Naive thymus-derived CD4-positive, alpha-beta T cell (primary cell): ENCODE measurements at regions of chr1 and their contacts with region 1.

Region 1: GRCh38 chr1:235513495-235514366 is 9.5 kb upstream of the B3GALNT2 start:
- DNase-seq: peak in 7 of 9 donors; percentile 32 to 68 (median 53)
- ATAC-seq: peak; percentile 75
- H3K4me3 ChIP-seq: no peak overlapping the region
- H3K4me3 Mint-ChIP-seq: no peak overlapping the region
- H3K27ac ChIP-seq: no peak overlapping the region
- H3K27ac Mint-ChIP-seq: peak overlapping the region in 1 of 9 donors; percentile 41
- H3K4me1 ChIP-seq: no peaks in the 10 kb centered on the region
- H3K4me1 Mint-ChIP-seq: peaks cover 0 to 10% (median 0%) of the 10 kb centered on the region in 7 donors
- H3K27me3 ChIP-seq: no peaks in the 10 kb centered on the region
- H3K27me3 Mint-ChIP-seq: peaks cover 0 to 27% (median 3%) of the 10 kb centered on the region in 5 donors

Region 2: GRCh38 chr1:235357485-235358378 is 156.0 kb before region 1 on chr1:
- CTCF ChIA-PET with region 1: no interaction called
- POLR2A ChIA-PET with region 1: no interaction called
- intact Hi-C with region 1: no loop called
- DNase-seq: no peak
- ATAC-seq: no peak
- H3K4me3 ChIP-seq: no peak overlapping the region
- H3K4me3 Mint-ChIP-seq: no peak overlapping the region
- H3K27ac ChIP-seq: no peak overlapping the region
- H3K27ac Mint-ChIP-seq: peak overlapping the region in 2 of 9 donors; percentile 20 to 24
- H3K4me1 ChIP-seq: no peaks in the 10 kb centered on the region
- H3K4me1 Mint-ChIP-seq: peaks cover 0 to 8% (median 0%) of the 10 kb centered on the region in 7 donors
- H3K27me3 ChIP-seq: no peaks in the 10 kb centered on the region
- H3K27me3 Mint-ChIP-seq: peaks cover 0 to 5% (median 0%) of the 10 kb centered on the region in 5 donors

Region 3: DNA sequence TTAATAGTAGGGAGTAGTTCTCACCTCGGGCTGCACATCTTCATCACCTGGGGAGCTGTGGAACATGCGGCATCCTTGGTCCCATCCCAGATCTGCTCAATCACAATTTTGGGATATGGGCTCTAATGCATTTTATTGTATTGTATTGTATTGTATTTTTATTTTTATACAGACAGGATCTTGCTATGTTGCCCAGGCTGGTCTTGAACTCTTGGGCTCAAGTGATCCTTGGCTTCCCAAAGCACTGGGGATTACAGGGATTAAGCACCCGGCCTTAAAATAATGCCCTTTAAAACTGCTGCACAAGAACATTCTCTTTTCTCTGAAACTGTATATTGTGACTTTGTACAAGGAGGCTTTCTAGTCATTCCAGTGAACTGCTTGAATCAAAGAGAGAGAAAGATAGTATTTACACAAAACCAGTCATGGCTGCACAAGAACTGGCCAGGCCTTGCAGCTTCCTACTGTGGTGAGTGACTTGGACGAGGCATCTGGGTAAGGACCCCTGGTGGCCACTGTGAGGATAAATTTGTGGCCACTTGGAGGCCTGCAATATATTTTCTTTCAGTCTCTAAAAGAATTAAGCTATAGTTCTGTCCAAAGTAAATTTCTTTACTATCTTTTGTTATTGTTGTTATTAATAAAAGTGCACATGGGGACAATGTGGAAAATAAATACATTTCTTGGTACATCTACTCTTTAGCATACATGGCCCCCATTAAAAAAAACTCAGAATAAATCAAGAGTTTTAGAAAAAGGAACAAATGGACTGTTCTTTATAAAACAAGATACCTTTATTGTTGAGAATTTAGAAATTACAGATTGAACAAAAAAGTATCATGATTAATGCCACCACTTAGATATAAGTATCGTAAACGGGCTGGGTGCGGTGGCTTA is 98.5 kb before region 1 on chr1:
- CTCF ChIA-PET with region 1: no interaction called
- POLR2A ChIA-PET with region 1: no interaction called
- intact Hi-C with region 1: no loop called
- DNase-seq: peak in 8 of 9 donors; percentile 24 to 61 (median 46)
- ATAC-seq: peak; percentile 87
- H3K4me3 ChIP-seq: no peak overlapping the region
- H3K4me3 Mint-ChIP-seq: no peak overlapping the region
- H3K27ac ChIP-seq: no peak overlapping the region
- H3K27ac Mint-ChIP-seq: no peak overlapping the region
- H3K4me1 ChIP-seq: no peaks in the 10 kb centered on the region
- H3K4me1 Mint-ChIP-seq: peaks cover 0 to 15% (median 6%) of the 10 kb centered on the region in 7 donors
- H3K27me3 ChIP-seq: no peaks in the 10 kb centered on the region
- H3K27me3 Mint-ChIP-seq: no peaks in the 10 kb centered on the region

Region 4: GRCh38 chr1:235557495-235557894 is 43.8 kb after region 1 on chr1:
- CTCF ChIA-PET with region 1: no interaction called
- POLR2A ChIA-PET with region 1: no interaction called
- intact Hi-C with region 1: no loop called
- DNase-seq: no peak
- ATAC-seq: no peak
- H3K4me3 ChIP-seq: no peak overlapping the region
- H3K4me3 Mint-ChIP-seq: no peak overlapping the region
- H3K27ac ChIP-seq: no peak overlapping the region
- H3K27ac Mint-ChIP-seq: no peak overlapping the region
- H3K4me1 ChIP-seq: no peaks in the 10 kb centered on the region
- H3K4me1 Mint-ChIP-seq: no peaks in the 10 kb centered on the region
- H3K27me3 ChIP-seq: no peaks in the 10 kb centered on the region
- H3K27me3 Mint-ChIP-seq: peaks cover 0 to 4% (median 0%) of the 10 kb centered on the region in 5 donors

Region 5: DNA sequence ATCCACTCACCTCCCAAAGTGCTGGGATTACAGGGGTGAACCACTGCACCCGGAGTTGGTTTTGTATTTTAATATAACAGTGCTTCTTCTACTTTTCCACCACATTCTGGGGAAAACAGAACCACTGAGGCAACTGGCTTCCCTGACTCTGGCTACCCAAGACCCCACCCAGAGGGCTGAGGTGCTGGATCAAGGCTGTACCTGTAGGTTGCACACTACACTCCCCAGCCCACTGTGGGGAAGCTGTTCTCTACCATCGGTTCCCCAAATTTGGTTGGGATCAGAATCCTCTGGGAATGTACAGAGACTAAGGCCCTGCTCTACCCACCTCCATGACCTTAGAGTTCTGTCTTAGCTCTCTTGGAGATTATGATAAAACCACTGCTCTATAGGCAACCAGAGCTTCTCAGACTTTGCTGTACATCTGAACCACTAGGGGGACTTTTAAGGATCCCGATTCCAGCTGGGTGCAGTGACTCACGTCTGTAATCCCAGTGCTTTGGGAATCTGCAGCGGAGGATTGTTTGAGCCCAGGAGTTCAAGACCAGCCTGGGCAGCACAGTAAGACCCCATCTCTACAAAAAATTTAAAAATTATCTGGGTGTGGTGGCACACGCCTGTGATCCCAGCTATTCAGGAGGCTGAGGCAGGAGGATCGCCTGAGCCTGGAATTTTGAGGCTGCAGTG is 84.3 kb after region 1 on chr1:
- CTCF ChIA-PET with region 1: no interaction called
- POLR2A ChIA-PET with region 1: no interaction called
- intact Hi-C with region 1: loop called in 1 of 2 experiments (anchors 2 kb)
- DNase-seq: no peak
- ATAC-seq: no peak
- H3K4me3 ChIP-seq: no peak overlapping the region
- H3K4me3 Mint-ChIP-seq: no peak overlapping the region
- H3K27ac ChIP-seq: no peak overlapping the region
- H3K27ac Mint-ChIP-seq: no peak overlapping the region
- H3K4me1 ChIP-seq: no peaks in the 10 kb centered on the region
- H3K4me1 Mint-ChIP-seq: peaks cover 0 to 9% (median 5%) of the 10 kb centered on the region in 7 donors
- H3K27me3 ChIP-seq: no peaks in the 10 kb centered on the region
- H3K27me3 Mint-ChIP-seq: peaks cover 0 to 19% (median 4%) of the 10 kb centered on the region in 5 donors

Region 6: GRCh38 chr1:235624721-235625333 is 111.1 kb after region 1 on chr1:
- CTCF ChIA-PET with region 1: no interaction called
- POLR2A ChIA-PET with region 1: no interaction called
- intact Hi-C with region 1: no loop called
- DNase-seq: no peak
- ATAC-seq: no peak
- H3K4me3 ChIP-seq: no peak overlapping the region
- H3K4me3 Mint-ChIP-seq: peak overlapping the region in 1 of 10 donors; percentile 14
- H3K27ac ChIP-seq: no peak overlapping the region
- H3K27ac Mint-ChIP-seq: no peak overlapping the region
- H3K4me1 ChIP-seq: no peaks in the 10 kb centered on the region
- H3K4me1 Mint-ChIP-seq: peaks cover 0 to 19% (median 0%) of the 10 kb centered on the region in 7 donors
- H3K27me3 ChIP-seq: no peaks in the 10 kb centered on the region
- H3K27me3 Mint-ChIP-seq: peaks cover 7 to 24% (median 10%) of the 10 kb centered on the region in 5 donors

Region 7: GRCh38 chr1:235734335-235734734 is 220.6 kb after region 1 on chr1:
- CTCF ChIA-PET with region 1: interaction called, 6 read pairs
- POLR2A ChIA-PET with region 1: no interaction called
- intact Hi-C with region 1: loop called (anchors 1 kb)
- DNase-seq: no peak
- ATAC-seq: no peak
- H3K4me3 ChIP-seq: no peak overlapping the region
- H3K4me3 Mint-ChIP-seq: no peak overlapping the region
- H3K27ac ChIP-seq: no peak overlapping the region
- H3K27ac Mint-ChIP-seq: no peak overlapping the region
- H3K4me1 ChIP-seq: no peaks in the 10 kb centered on the region
- H3K4me1 Mint-ChIP-seq: peaks cover 0 to 6% (median 0%) of the 10 kb centered on the region in 7 donors
- H3K27me3 ChIP-seq: no peaks in the 10 kb centered on the region
- H3K27me3 Mint-ChIP-seq: no peaks in the 10 kb centered on the region

Region 8: GRCh38 chr1:235783148-235783776 is 269.5 kb after region 1 on chr1:
- CTCF ChIA-PET with region 1: interaction called, 6 read pairs
- POLR2A ChIA-PET with region 1: interaction called, 3 read pairs
- intact Hi-C with region 1: loop called in 1 of 2 experiments (anchors 1 kb)
- DNase-seq: peak in 5 of 9 donors; percentile 1 to 20 (median 4)
- ATAC-seq: no peak
- H3K4me3 ChIP-seq: no peak overlapping the region
- H3K4me3 Mint-ChIP-seq: no peak overlapping the region
- H3K27ac ChIP-seq: no peak overlapping the region
- H3K27ac Mint-ChIP-seq: no peak overlapping the region
- H3K4me1 ChIP-seq: no peaks in the 10 kb centered on the region
- H3K4me1 Mint-ChIP-seq: no peaks in the 10 kb centered on the region
- H3K27me3 ChIP-seq: no peaks in the 10 kb centered on the region
- H3K27me3 Mint-ChIP-seq: no peaks in the 10 kb centered on the region

Region 9: DNA sequence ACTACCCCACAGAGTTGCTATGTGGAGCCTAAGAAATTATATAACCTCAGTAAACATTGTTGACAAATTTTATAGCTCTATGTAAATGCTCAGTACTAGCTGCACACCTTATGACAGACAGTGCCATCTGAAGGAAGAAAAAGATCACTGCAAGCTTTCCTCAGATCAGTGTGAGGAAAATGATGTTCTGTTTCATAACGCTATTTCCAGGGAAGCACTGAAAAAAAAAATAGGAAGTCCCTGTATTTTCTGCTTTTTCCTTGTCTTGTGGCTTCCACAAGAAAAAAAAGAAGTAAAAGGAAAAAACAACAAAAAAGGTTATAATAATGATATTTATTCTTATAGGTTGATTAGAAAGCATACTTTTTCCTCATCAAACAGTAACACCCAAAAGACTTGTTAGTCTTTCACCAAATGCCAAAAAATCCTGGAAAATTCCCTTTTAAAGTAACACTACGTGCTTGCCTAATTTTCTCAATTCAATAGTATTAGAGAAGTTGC is 329.8 kb after region 1 on chr1:
- CTCF ChIA-PET with region 1: interaction called, 3 read pairs
- POLR2A ChIA-PET with region 1: no interaction called
- intact Hi-C with region 1: loop called (anchors 1 kb)
- DNase-seq: peak in 3 of 9 donors; percentile 16 to 28 (median 28)
- ATAC-seq: peak; percentile 89
- H3K4me3 ChIP-seq: no peak overlapping the region
- H3K4me3 Mint-ChIP-seq: no peak overlapping the region
- H3K27ac ChIP-seq: no peak overlapping the region
- H3K27ac Mint-ChIP-seq: peak overlapping the region in 1 of 9 donors; percentile 33
- H3K4me1 ChIP-seq: peaks cover 11 to 20% of the 10 kb centered on the region in 2 donors
- H3K4me1 Mint-ChIP-seq: peaks cover 35 to 75% (median 58%) of the 10 kb centered on the region in 7 donors
- H3K27me3 ChIP-seq: no peaks in the 10 kb centered on the region
- H3K27me3 Mint-ChIP-seq: no peaks in the 10 kb centered on the region